ENCODE measurements at regions of chr17 and their contacts with region 1.

Region 1: DNA sequence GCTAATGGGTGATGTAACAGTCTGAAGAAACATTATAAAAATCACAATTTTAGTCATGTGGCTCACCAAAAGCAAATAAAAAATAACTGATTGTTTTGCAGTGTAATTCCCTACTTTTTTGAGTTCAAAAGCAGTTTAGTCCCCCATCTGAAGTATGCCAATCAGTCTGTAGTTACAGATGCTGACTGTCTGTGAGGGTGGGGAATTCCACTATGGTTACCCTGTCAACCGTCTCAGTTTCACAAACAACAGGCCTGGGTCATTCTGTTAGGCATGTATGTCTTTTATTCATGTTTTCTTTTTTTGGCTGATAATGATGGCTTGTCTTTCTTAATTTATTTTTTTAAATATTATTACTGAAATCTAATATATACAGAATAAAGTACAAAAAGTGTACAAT is 69.3 kb downstream of the STXBP4 start:
- DNase-seq: peak; percentile 45
- H3K4me3 Mint-ChIP-seq: no peak overlapping the region
- H3K27ac Mint-ChIP-seq: no peak overlapping the region
- H3K4me1 Mint-ChIP-seq: peaks cover 32% of the 10 kb centered on the region
- H3K27me3 Mint-ChIP-seq: no peaks in the 10 kb centered on the region

Region 2: DNA sequence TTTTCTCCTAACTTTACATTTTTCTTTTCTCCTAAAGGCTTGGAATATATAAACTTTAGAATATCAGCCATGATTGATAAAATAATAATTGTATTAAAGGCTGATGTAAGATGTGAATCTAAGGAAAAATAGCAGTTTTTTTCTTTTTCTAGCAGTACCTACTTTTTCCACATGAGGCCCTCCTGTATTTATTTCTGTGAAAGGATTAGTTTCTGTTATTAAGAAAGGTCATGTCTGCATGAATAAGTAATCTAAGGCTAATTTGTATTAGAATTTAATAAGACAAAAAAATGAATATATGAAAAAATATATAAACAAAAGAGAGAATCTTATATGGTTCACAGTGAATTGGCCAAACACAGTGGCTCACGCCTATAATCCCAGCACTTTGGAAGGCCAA is 16.0 kb after region 1 on chr17:
- intact Hi-C with region 1: no loop called
- DNase-seq: no peak
- H3K4me3 Mint-ChIP-seq: no peak overlapping the region
- H3K27ac Mint-ChIP-seq: no peak overlapping the region
- H3K4me1 Mint-ChIP-seq: no peaks in the 10 kb centered on the region
- H3K27me3 Mint-ChIP-seq: no peaks in the 10 kb centered on the region

Region 3: DNA sequence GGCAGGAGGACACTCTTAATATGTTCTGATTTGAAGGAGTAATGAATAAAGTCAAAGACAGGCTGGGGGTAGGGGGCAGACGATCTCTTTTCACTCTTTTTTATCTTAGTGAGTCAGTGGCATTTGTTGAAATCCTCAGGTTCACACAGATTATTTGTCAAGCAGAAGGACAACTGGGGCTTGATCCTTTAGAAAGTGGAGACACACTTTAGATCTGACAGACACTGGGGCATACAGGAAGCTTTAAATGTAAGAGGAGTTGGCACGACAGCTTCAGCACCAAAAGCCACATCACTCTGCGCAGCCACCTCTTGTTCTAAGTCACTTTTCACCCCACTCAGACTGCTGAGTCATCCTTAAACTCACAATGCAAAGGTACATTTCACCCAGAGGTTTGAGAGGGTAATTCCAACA is 52.3 kb after region 1 on chr17:
- intact Hi-C with region 1: loop called (anchors 1 kb)
- DNase-seq: peak; percentile 59
- H3K4me3 Mint-ChIP-seq: peak overlapping the region; percentile 46
- H3K27ac Mint-ChIP-seq: peak overlapping the region; percentile 86
- H3K4me1 Mint-ChIP-seq: peaks cover 19% of the 10 kb centered on the region
- H3K27me3 Mint-ChIP-seq: no peaks in the 10 kb centered on the region

Region 4: GRCh38 chr17:55238179-55238930 is 200.5 kb after region 1 on chr17:
- intact Hi-C with region 1: loop called (anchors 5 kb)
- DNase-seq: peak; percentile 75
- H3K4me3 Mint-ChIP-seq: peak overlapping the region; percentile 81
- H3K27ac Mint-ChIP-seq: peak overlapping the region; percentile 69
- H3K4me1 Mint-ChIP-seq: peaks cover 17% of the 10 kb centered on the region
- H3K27me3 Mint-ChIP-seq: peaks cover 34% of the 10 kb centered on the region

Region 5: DNA sequence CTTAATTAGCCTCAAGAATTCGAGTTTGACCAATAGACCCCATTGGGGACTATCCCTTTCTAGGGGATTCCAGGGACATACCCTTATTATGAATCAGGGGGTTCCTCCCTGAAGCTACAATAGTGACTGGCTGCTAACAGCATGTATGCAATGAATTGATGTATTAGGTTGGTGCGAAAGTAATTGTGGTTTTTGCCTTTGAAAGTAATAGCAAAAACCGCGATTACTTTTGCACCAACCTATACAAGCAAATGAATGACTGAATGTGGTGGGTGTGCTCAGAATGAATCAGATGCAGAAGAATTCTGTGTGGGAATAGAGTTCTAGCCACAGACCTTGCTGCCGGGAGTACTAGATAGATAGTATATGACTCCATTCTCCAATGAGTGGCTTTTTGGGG is 303.6 kb after region 1 on chr17:
- intact Hi-C with region 1: loop called (anchors 2 kb)
- DNase-seq: no peak
- H3K4me3 Mint-ChIP-seq: no peak overlapping the region
- H3K27ac Mint-ChIP-seq: no peak overlapping the region
- H3K4me1 Mint-ChIP-seq: peaks cover 46% of the 10 kb centered on the region
- H3K27me3 Mint-ChIP-seq: peaks cover 28% of the 10 kb centered on the region

Region 6: DNA sequence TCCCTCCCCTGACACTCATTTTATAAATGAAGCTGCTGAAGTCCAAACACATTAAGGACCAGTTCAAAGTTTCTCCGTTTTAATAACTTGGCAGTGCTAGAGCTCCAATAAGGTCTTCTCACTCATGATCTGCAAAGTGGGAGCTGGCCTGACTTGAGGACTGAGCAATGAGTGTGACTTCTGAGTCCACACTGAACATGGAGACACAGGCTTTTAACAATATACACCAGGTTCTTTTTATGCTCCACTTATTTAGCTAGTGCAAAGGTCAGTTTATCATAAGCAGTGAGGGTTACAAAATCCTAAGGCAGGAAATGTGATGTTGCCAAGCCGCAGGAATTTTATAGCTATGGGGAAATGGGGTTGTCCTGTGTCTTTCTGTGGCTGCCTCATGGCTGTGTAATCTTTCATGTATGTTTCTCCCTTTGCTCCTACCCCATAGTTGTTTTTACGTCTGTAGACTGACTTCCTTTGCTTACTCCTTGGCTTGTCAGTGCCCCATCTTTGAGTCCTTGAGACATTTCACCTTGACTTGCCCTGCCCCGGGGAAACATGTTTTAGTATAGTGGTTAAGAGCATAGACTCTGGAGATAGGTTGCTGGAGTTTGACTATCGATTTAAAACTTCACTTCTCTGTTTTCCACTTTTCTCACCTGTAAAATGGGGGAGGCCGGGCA is 395.9 kb after region 1 on chr17:
- intact Hi-C with region 1: loop called (anchors 5 kb)
- DNase-seq: no peak
- H3K4me3 Mint-ChIP-seq: no peak overlapping the region
- H3K27ac Mint-ChIP-seq: no peak overlapping the region
- H3K4me1 Mint-ChIP-seq: peaks cover 47% of the 10 kb centered on the region
- H3K27me3 Mint-ChIP-seq: peaks cover 3% of the 10 kb centered on the region

Measured in activated T-helper 1 cell treated with anti-CD3 and anti-CD28 coated beads, Interleukin-12 subunit alpha, Interleukin-12 subunit beta, Interleukin-2, Interleukin-4 antibody, amounts not matched to agents 30 ng/mL and 10 ng/mL and 1 ng/mL, durations not matched to agents 14 hours and 24 hours and 36 hours (primary cell).